ENCODE measurements at regions of chr5 and their contacts with region 1.

Region 1: DNA sequence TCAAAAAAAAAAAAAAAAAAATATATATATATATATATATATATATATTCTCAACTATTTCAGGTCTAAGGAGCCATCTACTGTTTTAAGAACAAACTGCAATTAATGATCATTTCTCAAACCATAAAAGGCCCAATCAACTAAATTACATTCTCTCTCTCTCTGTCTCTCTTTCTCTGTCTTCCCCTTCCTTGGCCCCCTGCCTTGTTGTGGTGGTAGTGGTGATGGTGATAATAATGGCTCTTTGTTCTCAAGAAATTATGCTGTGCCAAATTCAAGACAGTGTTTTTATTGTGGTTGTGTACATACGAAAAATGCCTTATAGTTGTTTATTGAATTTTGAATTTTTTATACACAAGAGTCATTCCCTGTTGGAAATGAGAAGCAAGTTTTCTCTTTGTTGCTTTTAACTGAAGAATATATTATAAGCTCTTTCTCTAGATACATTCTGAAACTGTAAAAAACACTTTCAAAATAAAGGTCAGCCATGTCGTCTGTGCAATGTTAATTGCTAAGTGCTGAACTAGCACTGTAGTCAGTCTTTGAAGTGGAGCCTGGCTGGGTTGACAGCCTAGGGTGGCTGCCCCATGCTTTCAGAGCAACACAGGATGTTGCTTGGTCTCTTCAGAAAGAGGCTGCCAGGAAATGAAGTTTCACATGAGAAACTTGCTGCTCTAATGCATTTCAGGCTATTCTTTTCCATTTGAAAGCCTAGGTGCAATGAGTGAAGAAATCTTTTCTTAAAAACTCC is 96.0 kb downstream of the HINT1 start:
- DNase-seq: peak; percentile 26 to 87 (median 58)
- ATAC-seq: peak; percentile 100
- H3K4me3 ChIP-seq: peak overlapping the region; percentile 20
- H3K4me3 Mint-ChIP-seq: peak overlapping the region; percentile 70
- H3K27ac ChIP-seq: peak overlapping the region; percentile 7 to 61
- H3K27ac Mint-ChIP-seq: peak overlapping the region; percentile 94
- H3K4me1 ChIP-seq: peaks cover 23% of the 10 kb centered on the region
- H3K4me1 Mint-ChIP-seq: peaks cover 52% of the 10 kb centered on the region
- H3K27me3 ChIP-seq: no peaks in the 10 kb centered on the region
- H3K27me3 Mint-ChIP-seq: no peaks in the 10 kb centered on the region
- CTCF ChIP-seq: peak; percentile 30

Region 2: GRCh38 chr5:130871346-130872086 is 197.6 kb before region 1 on chr5:
- CTCF ChIA-PET with region 1: no interaction called
- POLR2A ChIA-PET with region 1: no interaction called
- intact Hi-C with region 1: loop called in 1 of 2 experiments (anchors 5 kb)
- DNase-seq: peak in 13 of 14 experiments; percentile 5 to 73 (median 22)
- ATAC-seq: no peak
- H3K4me3 ChIP-seq: no peak overlapping the region
- H3K4me3 Mint-ChIP-seq: no peak overlapping the region
- H3K27ac ChIP-seq: no peak overlapping the region
- H3K27ac Mint-ChIP-seq: no peak overlapping the region
- H3K4me1 ChIP-seq: no peaks in the 10 kb centered on the region
- H3K4me1 Mint-ChIP-seq: no peaks in the 10 kb centered on the region
- H3K27me3 ChIP-seq: no peaks in the 10 kb centered on the region
- H3K27me3 Mint-ChIP-seq: no peaks in the 10 kb centered on the region
- CTCF ChIP-seq: peak; percentile 77

Region 3: DNA sequence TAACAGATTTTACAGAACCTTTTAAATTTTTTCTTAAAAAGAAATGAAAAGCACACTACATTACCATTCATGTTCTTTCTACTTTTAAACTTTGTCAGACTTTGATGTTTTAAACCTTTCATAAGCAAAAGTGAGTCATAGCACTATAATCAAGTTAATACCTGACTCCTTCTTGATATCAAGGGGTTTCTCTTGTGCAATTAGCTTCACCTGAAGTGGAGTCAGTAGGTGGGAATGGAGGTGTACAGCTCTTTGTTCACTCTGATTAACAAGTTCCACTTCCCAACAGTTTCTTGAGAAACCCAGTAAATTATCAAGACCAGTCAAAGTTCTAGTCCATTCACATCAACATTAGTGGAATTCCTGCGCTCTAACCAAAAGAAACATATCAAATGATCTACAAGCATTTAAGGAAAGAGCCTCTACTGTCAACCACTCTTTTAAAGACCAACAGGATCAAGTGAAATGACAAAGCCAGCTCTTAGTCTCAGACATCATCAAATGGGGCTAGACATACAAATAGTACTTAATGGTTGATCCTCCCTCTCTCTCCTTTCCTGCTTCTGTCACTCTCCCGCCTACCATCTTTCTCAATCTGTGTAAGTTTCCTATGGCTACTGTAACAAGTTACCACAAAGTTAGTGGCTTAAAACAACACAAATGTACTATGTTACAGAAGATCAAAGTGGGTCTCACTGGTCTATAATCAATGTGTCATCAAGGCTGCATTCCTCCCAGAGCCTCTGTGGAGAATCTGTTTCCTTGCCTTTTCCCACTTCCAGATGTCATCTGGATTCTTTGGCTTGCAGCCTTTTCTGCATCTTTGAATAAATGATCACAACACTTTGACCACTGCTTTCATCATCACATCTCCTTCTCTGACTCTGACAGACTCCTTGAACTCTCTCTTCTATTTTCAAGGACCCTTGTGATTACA is 28.0 kb after region 1 on chr5:
- CTCF ChIA-PET with region 1: no interaction called
- POLR2A ChIA-PET with region 1: no interaction called
- intact Hi-C with region 1: loop called in 1 of 2 experiments (anchors 1 kb)
- DNase-seq: no peak
- ATAC-seq: no peak
- H3K4me3 ChIP-seq: no peak overlapping the region
- H3K4me3 Mint-ChIP-seq: no peak overlapping the region
- H3K27ac ChIP-seq: no peak overlapping the region
- H3K27ac Mint-ChIP-seq: no peak overlapping the region
- H3K4me1 ChIP-seq: no peaks in the 10 kb centered on the region
- H3K4me1 Mint-ChIP-seq: no peaks in the 10 kb centered on the region
- H3K27me3 ChIP-seq: no peaks in the 10 kb centered on the region
- H3K27me3 Mint-ChIP-seq: no peaks in the 10 kb centered on the region
- CTCF ChIP-seq: no peak

Region 4: GRCh38 chr5:131536211-131536826 is 467.3 kb after region 1 on chr5:
- CTCF ChIA-PET with region 1: no interaction called
- POLR2A ChIA-PET with region 1: no interaction called
- intact Hi-C with region 1: no loop called
- DNase-seq: peak in 3 of 14 experiments; percentile 62 to 77 (median 62)
- ATAC-seq: peak; percentile 48
- H3K4me3 ChIP-seq: no peak overlapping the region
- H3K4me3 Mint-ChIP-seq: peak overlapping the region; percentile 77
- H3K27ac ChIP-seq: peak overlapping the region; percentile 42 to 59
- H3K27ac Mint-ChIP-seq: peak overlapping the region; percentile 84
- H3K4me1 ChIP-seq: peaks cover 22% of the 10 kb centered on the region
- H3K4me1 Mint-ChIP-seq: peaks cover 86% of the 10 kb centered on the region
- H3K27me3 ChIP-seq: no peaks in the 10 kb centered on the region
- H3K27me3 Mint-ChIP-seq: no peaks in the 10 kb centered on the region
- CTCF ChIP-seq: no peak